Activated T-helper 1 cell treated with anti-CD3 and anti-CD28 coated beads, Interleukin-12 subunit alpha, Interleukin-12 subunit beta, Interleukin-2, Interleukin-4 antibody, amounts not matched to agents 30 ng/mL and 10 ng/mL and 1 ng/mL, durations not matched to agents 14 hours and 24 hours and 36 hours (primary cell): ENCODE measurements at regions of chrX and their contacts with region 1.

Region 1: DNA sequence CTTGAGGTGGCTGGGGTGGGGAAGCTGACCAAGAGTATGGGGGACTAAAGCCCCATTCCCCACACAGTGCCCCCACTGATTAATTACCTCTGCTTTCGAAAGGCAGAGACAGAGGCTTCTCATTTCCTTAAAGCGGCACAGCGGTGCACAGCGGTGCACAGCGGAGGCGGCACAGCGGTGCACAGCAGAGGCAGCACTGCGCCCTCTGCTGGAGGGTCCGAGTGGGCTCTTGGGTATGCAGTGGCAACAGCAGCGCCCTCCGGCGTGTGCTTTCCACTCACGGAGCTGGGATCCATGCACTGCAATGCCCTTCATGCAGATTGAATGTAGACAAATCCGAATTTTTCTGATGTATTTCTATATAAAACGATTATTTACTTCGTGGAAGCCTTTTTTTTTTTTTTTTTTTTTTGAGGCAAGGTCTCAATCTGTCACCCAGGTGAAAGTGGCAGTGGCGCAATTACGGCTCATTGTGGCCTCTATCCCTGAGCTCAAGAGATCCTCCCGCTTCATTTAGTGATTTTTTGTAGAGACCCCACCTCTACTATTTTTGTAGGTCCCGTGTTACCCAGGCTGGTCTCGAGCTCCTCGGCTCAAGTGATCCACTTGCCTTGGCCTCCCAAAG is 19.7 kb upstream of the PRPS2 start:
- DNase-seq: peak; percentile 57
- H3K4me3 Mint-ChIP-seq: peak overlapping the region; percentile 46
- H3K27ac Mint-ChIP-seq: no peak overlapping the region
- H3K4me1 Mint-ChIP-seq: peaks cover 6% of the 10 kb centered on the region
- H3K27me3 Mint-ChIP-seq: peaks cover 19% of the 10 kb centered on the region

Region 2: GRCh38 chrX:12701628-12702027 is 69.9 kb before region 1 on chrX:
- intact Hi-C with region 1: loop called (anchors 1 kb)
- DNase-seq: peak; percentile 2
- H3K4me3 Mint-ChIP-seq: no peak overlapping the region
- H3K27ac Mint-ChIP-seq: no peak overlapping the region
- H3K4me1 Mint-ChIP-seq: peaks cover 4% of the 10 kb centered on the region
- H3K27me3 Mint-ChIP-seq: peaks cover 5% of the 10 kb centered on the region

Region 3: GRCh38 chrX:12791257-12792228 is 20.0 kb after region 1 on chrX and contains the start of gene PRPS2:
- intact Hi-C with region 1: loop called (anchors 1 kb)
- DNase-seq: peak; percentile 62
- H3K4me3 Mint-ChIP-seq: peak within 1 kb of the TSS; percentile 88
- H3K27ac Mint-ChIP-seq: peak within 1 kb of the TSS; percentile 76
- H3K4me1 Mint-ChIP-seq: peaks cover 41% of the 10 kb centered on the region
- H3K27me3 Mint-ChIP-seq: peaks cover 8% of the 10 kb centered on the region
- total RNA-seq, gene PRPS2: 115 and 116 TPM in 2 replicates

Region 4: GRCh38 chrX:12901486-12901885 is 129.9 kb after region 1 on chrX:
- intact Hi-C with region 1: loop called (anchors 2 kb)
- DNase-seq: peak; percentile 26
- H3K4me3 Mint-ChIP-seq: no peak overlapping the region
- H3K27ac Mint-ChIP-seq: no peak overlapping the region
- H3K4me1 Mint-ChIP-seq: peaks cover 18% of the 10 kb centered on the region
- H3K27me3 Mint-ChIP-seq: peaks cover 7% of the 10 kb centered on the region